K562 (cell line): ENCODE measurements at regions of chr11 and their contacts with region 1.

Region 1: DNA sequence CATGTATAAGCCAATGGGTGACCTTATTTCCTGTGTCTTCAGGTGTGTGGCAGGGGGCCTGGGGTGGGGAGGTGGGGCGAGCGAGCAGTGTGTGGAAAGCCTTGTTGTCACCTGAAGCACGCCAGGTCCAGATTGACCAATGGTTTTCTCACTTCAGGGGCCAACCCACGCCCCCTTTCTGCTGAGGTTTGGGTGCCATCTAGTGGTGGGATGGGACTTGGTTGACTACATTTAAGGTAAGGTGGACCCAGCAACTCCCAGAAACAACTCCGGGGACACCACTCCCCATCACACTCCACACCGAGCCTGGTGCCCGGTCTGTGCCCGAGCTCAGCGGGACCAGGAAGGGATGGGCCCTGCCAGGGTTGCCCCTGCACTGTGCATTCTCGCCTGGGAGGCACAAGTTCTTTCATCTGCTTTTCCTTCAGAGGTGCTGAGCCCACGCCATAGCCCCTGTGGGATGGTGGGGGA is 40.0 kb downstream of the TPCN2 start:
- DNase-seq: peak; percentile 87 to 92 (median 92)
- ATAC-seq: peak; percentile 96
- H3K4me3 ChIP-seq: no peak overlapping the region
- H3K27ac ChIP-seq: no peak overlapping the region
- H3K4me1 ChIP-seq: peaks cover 0 to 16% of the 10 kb centered on the region in 2 experiments; a peak in 1 of 5 replicates
- H3K27me3 ChIP-seq: no peaks in the 10 kb centered on the region
- CTCF ChIP-seq: peak; percentile 83 to 91 (median 86)
- EP300 ChIP-seq: no peak
- POLR2A ChIP-seq: no peak
- RAD21 ChIP-seq: peak; percentile 68 to 85

Region 2: DNA sequence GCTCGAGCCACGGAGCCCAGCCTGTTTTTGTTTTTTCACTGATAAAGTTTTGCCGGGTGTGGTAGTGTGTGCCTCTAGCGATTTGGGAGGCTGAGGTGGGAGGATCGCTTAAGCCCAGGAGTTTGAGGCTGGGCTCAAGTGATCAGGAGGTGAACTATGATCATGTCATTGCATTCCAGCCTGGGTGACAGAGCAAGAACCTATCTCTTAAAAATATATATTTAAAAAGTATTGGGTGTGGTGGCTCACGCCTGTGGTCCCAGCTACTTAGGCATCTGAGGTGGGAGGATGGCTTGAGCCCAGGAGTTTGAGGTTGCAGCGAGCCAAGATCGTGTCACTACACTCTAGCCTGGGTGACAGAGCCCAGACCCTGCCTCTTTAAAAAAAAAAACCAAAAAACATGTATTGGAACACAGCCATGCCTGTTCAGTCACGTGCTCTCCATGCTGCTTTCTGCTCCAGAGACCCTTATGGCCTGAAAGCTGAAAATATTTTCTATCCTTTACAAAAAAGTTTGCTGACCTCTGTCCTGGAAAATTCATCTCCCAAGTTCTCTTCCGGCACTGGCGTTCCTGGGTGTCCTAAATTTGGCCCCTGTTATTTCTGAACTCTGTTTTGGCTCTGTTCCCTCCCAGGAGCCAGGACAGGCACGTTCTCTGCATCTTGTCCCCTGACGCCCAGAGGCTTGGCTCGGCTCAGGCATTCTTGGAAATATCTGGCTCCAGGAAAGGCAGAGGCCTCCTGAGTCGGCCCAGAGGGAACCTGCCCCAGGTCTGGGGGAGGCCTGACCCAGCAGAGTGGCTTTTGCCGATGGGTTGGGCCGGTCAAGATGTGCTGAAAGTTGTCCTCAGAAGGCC is 689.5 kb before region 1 on chr11:
- CTCF ChIA-PET with region 1: no interaction called
- POLR2A ChIA-PET with region 1: no interaction called
- in situ Hi-C with region 1: no loop called
- intact Hi-C with region 1: no loop called
- DNase-seq: peak in 2 of 4 experiments; percentile 32 to 51
- ATAC-seq: peak; percentile 54
- H3K4me3 ChIP-seq: no peak overlapping the region
- H3K27ac ChIP-seq: no peak overlapping the region
- H3K4me1 ChIP-seq: peaks cover 0 to 27% of the 10 kb centered on the region in 2 experiments; a peak in 3 of 5 replicates
- H3K27me3 ChIP-seq: no peaks in the 10 kb centered on the region
- CTCF ChIP-seq: no peak
- EP300 ChIP-seq: no peak
- POLR2A ChIP-seq: no peak
- RAD21 ChIP-seq: no peak

Region 3: GRCh38 chr11:68621826-68622225 is 466.9 kb before region 1 on chr11:
- CTCF ChIA-PET with region 1: no interaction called
- POLR2A ChIA-PET with region 1: no interaction called
- in situ Hi-C with region 1: loop called (anchors 10 kb)
- intact Hi-C with region 1: no loop called
- DNase-seq: no peak
- ATAC-seq: no peak
- H3K4me3 ChIP-seq: no peak overlapping the region
- H3K27ac ChIP-seq: no peak overlapping the region
- H3K4me1 ChIP-seq: no peaks in the 10 kb centered on the region; a peak in 2 of 5 replicates
- H3K27me3 ChIP-seq: peaks cover 5 to 6% of the 10 kb centered on the region in 2 experiments; a peak in 4 of 5 replicates
- CTCF ChIP-seq: no peak
- EP300 ChIP-seq: no peak
- POLR2A ChIP-seq: no peak
- RAD21 ChIP-seq: no peak

Region 4: GRCh38 chr11:68903288-68904247 is 185.1 kb before region 1 on chr11 and contains the starts of genes IGHMBP2 and MRPL21:
- CTCF ChIA-PET with region 1: no interaction called
- POLR2A ChIA-PET with region 1: no interaction called
- in situ Hi-C with region 1: no loop called
- intact Hi-C with region 1: loop called (anchors 5 kb)
- DNase-seq: peak; percentile 85 to 93 (median 88)
- ATAC-seq: peak; percentile 95
- H3K4me3 ChIP-seq: peak within 1 kb of the TSS; percentile 92
- H3K27ac ChIP-seq: peak within 1 kb of the TSS; percentile 90
- H3K4me1 ChIP-seq: peaks cover 19 to 23% of the 10 kb centered on the region in 2 experiments; a peak in 4 of 5 replicates
- H3K27me3 ChIP-seq: no peaks in the 10 kb centered on the region
- CTCF ChIP-seq: no peak
- EP300 ChIP-seq: peak; percentile 55
- POLR2A ChIP-seq: peak; percentile 97
- RAD21 ChIP-seq: peak; percentile 31 to 33; a peak in 3 of 4 replicates
- polyA plus RNA-seq, gene IGHMBP2: 1.6 to 1.8 TPM
- polyA plus RNA-seq, gene MRPL21: 448 to 618 TPM

Region 5: DNA sequence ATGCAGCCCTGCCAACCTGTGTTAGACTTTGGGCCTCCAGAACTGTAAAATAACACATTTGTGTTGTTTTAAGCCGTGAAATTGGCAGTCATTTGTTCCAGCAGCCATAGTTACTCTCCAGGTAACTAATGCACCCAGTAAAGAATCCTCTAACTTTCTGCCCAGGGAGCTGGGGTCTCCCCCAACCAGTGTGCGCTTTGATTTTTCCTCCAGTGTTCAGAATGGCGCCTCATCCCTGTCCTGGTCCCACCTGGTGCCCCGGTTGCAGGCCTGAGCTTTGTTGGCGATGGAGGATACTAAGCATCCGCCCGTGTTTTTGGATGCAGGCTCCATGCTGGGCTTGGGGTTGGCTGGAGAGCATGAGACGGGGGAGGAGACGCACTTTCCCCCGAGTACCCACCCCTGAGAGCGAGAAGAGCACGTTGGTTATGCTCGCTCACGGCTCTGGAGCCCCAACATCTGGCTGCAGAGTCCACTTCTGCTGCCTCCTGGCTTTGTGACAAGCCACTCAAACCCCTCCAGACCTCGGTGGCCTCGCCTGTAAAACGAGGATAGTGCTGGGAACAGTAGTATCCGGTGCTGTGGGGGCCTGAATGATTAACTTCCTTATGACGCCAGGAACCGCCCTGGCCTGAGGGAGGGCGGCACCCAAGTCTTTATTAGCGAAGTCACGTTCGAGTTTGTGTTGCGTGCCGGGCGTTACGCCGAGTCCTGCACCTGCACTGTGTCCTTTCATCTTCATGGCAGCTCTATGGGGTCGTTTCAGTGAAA is 133.7 kb before region 1 on chr11:
- CTCF ChIA-PET with region 1: no interaction called
- POLR2A ChIA-PET with region 1: no interaction called
- in situ Hi-C with region 1: no loop called
- intact Hi-C with region 1: loop called (anchors 1 kb)
- DNase-seq: peak; percentile 55 to 67 (median 60)
- ATAC-seq: peak; percentile 90
- H3K4me3 ChIP-seq: no peak overlapping the region
- H3K27ac ChIP-seq: no peak overlapping the region
- H3K4me1 ChIP-seq: peaks cover 8 to 18% of the 10 kb centered on the region in 2 experiments; a peak in 4 of 5 replicates
- H3K27me3 ChIP-seq: peaks cover 8 to 31% of the 10 kb centered on the region in 2 experiments; a peak in 4 of 5 replicates
- CTCF ChIP-seq: no peak
- EP300 ChIP-seq: no peak
- POLR2A ChIP-seq: no peak
- RAD21 ChIP-seq: no peak

Region 6: DNA sequence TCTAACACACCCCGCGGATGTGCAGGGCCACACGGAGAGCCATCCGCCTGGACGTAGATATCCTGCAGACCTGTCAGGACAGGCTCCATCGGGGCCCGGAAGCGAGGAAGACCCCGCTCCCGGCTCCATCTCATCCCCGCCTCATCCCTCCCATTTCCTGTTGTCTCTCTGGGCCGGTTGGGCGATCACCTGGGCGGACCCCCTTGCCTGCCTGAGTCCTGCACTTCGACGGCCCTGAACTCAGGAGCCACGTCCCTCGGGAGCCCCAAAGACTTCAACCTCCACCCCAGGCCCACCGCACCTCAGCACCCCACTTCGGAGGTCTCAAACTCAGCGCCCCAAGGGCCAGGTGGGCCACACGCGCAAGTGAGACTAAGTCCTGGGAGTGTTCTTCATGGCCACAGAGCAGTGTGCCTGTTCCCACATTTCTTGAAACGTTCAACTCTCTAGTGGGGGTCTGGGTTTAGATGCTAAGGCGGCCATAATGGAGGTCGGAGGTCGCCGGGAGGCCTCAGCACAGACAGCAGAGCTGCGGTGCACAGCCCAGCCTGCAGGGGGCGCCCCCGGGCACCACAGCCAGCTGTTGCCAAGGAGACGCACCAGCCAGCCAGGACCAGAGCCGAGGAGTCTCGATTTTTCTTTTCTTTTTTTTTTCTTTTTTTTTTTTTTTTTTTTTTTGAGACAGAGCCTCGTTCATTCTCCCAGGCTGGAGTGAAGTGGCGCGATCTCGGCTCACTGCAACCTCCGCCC is 1088.4 kb after region 1 on chr11:
- CTCF ChIA-PET with region 1: no interaction called
- POLR2A ChIA-PET with region 1: no interaction called
- in situ Hi-C with region 1: no loop called
- intact Hi-C with region 1: no loop called
- DNase-seq: peak; percentile 70 to 95 (median 92)
- ATAC-seq: peak; percentile 98
- H3K4me3 ChIP-seq: no peak overlapping the region
- H3K27ac ChIP-seq: no peak overlapping the region
- H3K4me1 ChIP-seq: peaks cover 0 to 22% of the 10 kb centered on the region in 2 experiments; a peak in 3 of 5 replicates
- H3K27me3 ChIP-seq: peaks cover 20 to 53% of the 10 kb centered on the region in 2 experiments; a peak in 4 of 5 replicates
- CTCF ChIP-seq: peak; percentile 87 to 92 (median 89)
- EP300 ChIP-seq: no peak
- POLR2A ChIP-seq: no peak
- RAD21 ChIP-seq: peak in 1 of 2 experiments; percentile 30; a peak in 2 of 4 replicates